PC-3 (cell line): ENCODE measurements at regions of chr2 and their contacts with region 1.

Region 1: GRCh38 chr2:61135510-61135909 is 26.5 kb upstream of the C2orf74 start:
- DNase-seq: peak; percentile 52
- ATAC-seq: peak; percentile 88
- H3K4me3 ChIP-seq: no peak overlapping the region
- H3K27ac ChIP-seq: no peak overlapping the region
- H3K4me1 ChIP-seq: no peaks in the 10 kb centered on the region
- H3K27me3 ChIP-seq: no peaks in the 10 kb centered on the region
- CTCF ChIP-seq: peak; percentile 66

Region 2: GRCh38 chr2:61368687-61369665 is 233.5 kb after region 1 on chr2:
- CTCF ChIA-PET with region 1: no interaction called
- POLR2A ChIA-PET with region 1: no interaction called
- intact Hi-C with region 1: no loop called
- DNase-seq: no peak
- ATAC-seq: no peak
- H3K4me3 ChIP-seq: no peak overlapping the region
- H3K27ac ChIP-seq: no peak overlapping the region
- H3K4me1 ChIP-seq: peaks cover 7% of the 10 kb centered on the region
- H3K27me3 ChIP-seq: no peaks in the 10 kb centered on the region
- CTCF ChIP-seq: no peak

Region 3: GRCh38 chr2:61898810-61899209 is 763.3 kb after region 1 on chr2:
- CTCF ChIA-PET with region 1: interaction called, 3 read pairs
- POLR2A ChIA-PET with region 1: no interaction called
- intact Hi-C with region 1: loop called (anchors 10 kb)
- DNase-seq: peak; percentile 52
- ATAC-seq: peak; percentile 70
- H3K4me3 ChIP-seq: no peak overlapping the region
- H3K27ac ChIP-seq: no peak overlapping the region
- H3K4me1 ChIP-seq: no peaks in the 10 kb centered on the region
- H3K27me3 ChIP-seq: no peaks in the 10 kb centered on the region
- CTCF ChIP-seq: peak; percentile 70